ENCODE measurements at regions of chr3 and their contacts with region 1.

Region 1: GRCh38 chr3:122679085-122679881 is 1.4 kb upstream of the PARP14 start:
- DNase-seq: peak; percentile 72
- ATAC-seq: peak; percentile 73
- H3K4me3 ChIP-seq: peak overlapping the region; percentile 77 to 85
- H3K27ac ChIP-seq: peak overlapping the region; percentile 68
- H3K4me1 ChIP-seq: peaks cover 13 to 29% of the 10 kb centered on the region in 2 experiments; a peak in 3 of 4 replicates
- H3K27me3 ChIP-seq: no peaks in the 10 kb centered on the region
- CTCF ChIP-seq: peak; percentile 69 to 91 (median 78)
- POLR2A ChIP-seq: no peak
- RAD21 ChIP-seq: peak; percentile 95

Region 2: DNA sequence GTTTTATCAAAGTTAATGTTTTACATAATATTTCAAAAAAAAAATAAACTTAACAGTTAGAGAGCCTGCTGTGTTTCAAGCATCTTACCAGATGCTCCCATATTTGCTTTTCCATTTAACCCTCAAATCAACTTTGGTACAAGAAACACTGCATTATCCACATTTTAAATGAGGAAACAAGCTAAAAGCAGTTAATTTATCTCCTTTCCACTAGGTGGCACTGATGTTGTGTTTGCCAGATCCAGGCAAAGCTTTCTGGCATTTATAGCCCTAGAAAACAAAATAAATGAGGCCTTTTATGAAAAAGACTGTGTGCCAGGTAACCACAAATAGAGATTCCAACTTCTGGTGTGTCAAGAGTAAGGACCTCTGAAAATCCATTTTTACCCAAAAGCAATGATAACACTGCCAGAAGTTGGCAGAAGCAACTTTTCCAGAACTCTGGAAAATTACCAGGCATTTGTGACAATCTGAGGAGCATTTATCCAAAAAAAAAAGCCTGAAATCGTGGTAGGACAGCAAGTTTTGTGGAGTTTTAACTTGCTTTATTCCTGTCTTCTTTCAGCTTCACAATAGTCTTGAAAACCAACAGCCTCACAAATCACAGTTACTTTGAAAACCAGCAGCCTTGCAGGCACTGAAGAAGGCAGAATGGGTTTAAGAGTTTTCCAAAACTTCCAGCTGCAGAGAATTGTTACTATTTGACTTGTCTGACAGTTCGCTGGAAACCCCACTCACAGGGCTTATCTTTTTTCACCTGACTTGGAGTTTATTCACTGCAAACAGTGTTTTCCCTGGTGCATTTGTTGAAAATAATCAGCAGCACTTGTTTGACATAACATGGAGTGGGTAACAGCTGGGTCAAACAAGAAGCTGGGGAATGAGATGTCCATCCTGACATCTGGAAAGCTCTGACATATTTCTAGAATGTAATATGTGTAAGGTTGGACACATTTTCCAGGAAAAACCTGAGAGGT is 286.1 kb before region 1 on chr3:
- CTCF ChIA-PET with region 1: interaction called, 29 read pairs
- POLR2A ChIA-PET with region 1: no interaction called
- RAD21 ChIA-PET with region 1: interaction called in 1 of 2 experiments, 3 read pairs
- intact Hi-C with region 1: loop called (anchors 1 kb)
- DNase-seq: no peak
- ATAC-seq: no peak
- H3K4me3 ChIP-seq: no peak overlapping the region
- H3K27ac ChIP-seq: no peak overlapping the region
- H3K4me1 ChIP-seq: peaks cover 0 to 4% of the 10 kb centered on the region in 2 experiments; a peak in 1 of 4 replicates
- H3K27me3 ChIP-seq: no peaks in the 10 kb centered on the region
- CTCF ChIP-seq: peak; percentile 60 to 74 (median 61); a peak in 5 of 6 replicates
- POLR2A ChIP-seq: no peak
- RAD21 ChIP-seq: peak; percentile 72

Region 3: DNA sequence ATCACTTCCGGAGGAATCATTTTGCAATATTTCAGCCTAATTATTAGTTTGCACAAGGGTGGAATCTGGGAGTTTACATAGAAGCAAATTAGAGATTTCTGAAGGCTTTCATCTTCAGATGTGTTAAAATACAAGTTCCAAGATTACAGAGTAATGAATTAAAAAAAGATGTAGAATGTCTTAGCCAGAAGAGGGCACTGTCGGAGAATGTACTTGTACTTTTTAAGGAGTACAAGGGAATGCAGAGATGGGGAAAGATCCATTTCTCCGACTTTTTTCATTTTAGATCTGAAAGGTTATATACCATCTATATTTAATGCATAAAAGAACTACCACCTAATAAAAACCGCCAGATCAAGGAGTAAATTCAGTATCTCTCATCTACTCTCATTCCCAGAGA is 220.3 kb before region 1 on chr3:
- CTCF ChIA-PET with region 1: interaction called, 13 read pairs
- POLR2A ChIA-PET with region 1: interaction called, 3 read pairs
- RAD21 ChIA-PET with region 1: interaction called in 1 of 2 experiments, 3 read pairs
- intact Hi-C with region 1: loop called (anchors 2 kb)
- DNase-seq: peak; percentile 23
- ATAC-seq: peak; percentile 61; the same call in 1 of the 2 replicates
- H3K4me3 ChIP-seq: no peak overlapping the region
- H3K27ac ChIP-seq: no peak overlapping the region
- H3K4me1 ChIP-seq: no peaks in the 10 kb centered on the region
- H3K27me3 ChIP-seq: no peaks in the 10 kb centered on the region
- CTCF ChIP-seq: peak; percentile 25 to 55 (median 48); a peak in 4 of 6 replicates
- POLR2A ChIP-seq: no peak
- RAD21 ChIP-seq: peak; percentile 77

Region 4: DNA sequence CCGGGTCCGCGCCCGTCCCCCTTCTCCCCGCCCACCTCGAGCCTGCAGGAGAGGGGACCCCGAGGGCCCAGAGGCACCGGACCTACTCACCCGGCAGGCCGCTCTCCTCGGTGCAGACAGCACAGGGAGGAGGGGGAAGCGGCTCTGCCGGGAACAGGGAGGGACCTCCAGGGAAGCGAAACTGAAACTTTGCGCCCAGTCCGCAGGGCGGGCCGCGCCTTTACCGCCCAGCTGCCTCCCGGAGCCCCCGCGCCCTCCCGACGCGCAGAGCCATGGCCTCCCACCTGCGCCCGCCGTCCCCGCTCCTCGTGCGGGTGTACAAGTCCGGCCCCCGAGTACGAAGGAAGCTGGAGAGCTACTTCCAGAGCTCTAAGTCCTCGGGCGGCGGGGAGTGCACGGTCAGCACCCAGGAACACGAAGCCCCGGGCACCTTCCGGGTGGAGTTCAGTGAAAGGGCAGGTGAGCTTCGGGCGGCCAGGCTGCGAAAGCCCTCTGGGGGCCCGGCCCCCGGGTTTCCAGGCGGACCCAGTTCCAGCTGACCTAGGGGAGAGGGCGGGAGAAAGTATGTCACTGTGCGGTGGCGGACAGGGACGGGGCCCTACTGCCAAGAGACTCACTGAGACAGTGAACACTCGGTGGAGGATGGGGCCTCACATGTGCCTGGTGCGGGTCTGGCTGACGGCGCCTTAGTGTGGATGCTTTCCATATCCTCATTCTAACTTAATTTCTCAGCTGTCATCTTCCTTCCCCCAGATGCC is 114.9 kb before region 1 on chr3 and contains the starts of genes DTX3L and PARP9:
- CTCF ChIA-PET with region 1: interaction called, 20 read pairs
- POLR2A ChIA-PET with region 1: interaction called, 9 read pairs
- RAD21 ChIA-PET with region 1: interaction called, 3 to 4 read pairs
- intact Hi-C with region 1: loop called (anchors 1 kb)
- DNase-seq: no peak
- ATAC-seq: peak; percentile 86
- H3K4me3 ChIP-seq: peak within 1 kb of the TSS; percentile 60 to 81
- H3K27ac ChIP-seq: peak within 1 kb of the TSS; percentile 72
- H3K4me1 ChIP-seq: peaks cover 8 to 17% of the 10 kb centered on the region in 2 experiments
- H3K27me3 ChIP-seq: no peaks in the 10 kb centered on the region
- CTCF ChIP-seq: no peak
- POLR2A ChIP-seq: peak; percentile 32
- RAD21 ChIP-seq: no peak
- total RNA-seq, gene DTX3L: 13.1 TPM
- total RNA-seq, gene PARP9: 9.5 TPM

Region 5: DNA sequence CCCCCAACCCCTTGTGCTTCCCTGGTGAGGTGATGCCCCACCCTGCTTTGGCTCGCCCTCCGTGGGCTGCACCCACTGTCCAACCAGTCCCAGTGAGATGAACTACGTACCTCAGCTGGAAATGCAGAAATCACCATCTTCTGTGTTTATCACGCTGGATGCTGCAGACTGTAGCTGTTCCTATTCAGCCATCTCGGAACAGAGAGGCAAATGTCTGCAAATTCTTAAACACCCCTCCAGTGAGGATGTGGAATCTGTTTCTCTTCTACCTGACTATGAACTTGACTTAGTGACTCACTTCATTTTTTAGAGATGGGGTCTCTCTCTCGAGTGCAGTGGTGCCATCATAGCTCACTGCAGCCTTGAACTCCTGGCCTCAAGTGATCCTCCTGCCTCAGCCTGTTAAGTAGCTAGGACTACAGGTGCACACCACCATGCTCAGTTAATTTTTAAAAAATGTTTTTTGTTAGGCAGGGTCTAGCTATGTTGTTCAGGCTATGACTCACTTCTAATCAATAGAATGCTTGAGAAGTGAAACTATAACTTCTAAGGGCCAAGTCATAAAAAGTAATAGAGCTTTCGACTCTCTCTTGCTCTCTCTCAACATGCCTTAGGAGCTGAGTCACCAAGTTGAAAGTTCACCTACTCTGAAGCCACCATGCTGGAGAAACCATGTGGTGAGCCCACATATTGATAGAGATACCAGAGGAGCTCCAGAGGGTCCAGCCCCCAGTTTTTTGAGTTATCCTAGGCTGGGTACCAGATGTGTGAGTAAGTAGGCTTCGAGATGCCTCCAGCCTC is 10.2 kb before region 1 on chr3:
- CTCF ChIA-PET with region 1: interaction called, 12 read pairs
- POLR2A ChIA-PET with region 1: interaction called, 9 read pairs
- RAD21 ChIA-PET with region 1: interaction called in 1 of 2 experiments, 6 read pairs
- intact Hi-C with region 1: no loop called
- DNase-seq: peak; percentile 89
- ATAC-seq: peak; percentile 92
- H3K4me3 ChIP-seq: peak overlapping the region in 1 of 2 experiments; percentile 11; a peak in 1 of 4 replicates
- H3K27ac ChIP-seq: peak overlapping the region; percentile 69; the same call in 1 of the 2 replicates
- H3K4me1 ChIP-seq: peaks cover 14 to 20% of the 10 kb centered on the region in 2 experiments
- H3K27me3 ChIP-seq: no peaks in the 10 kb centered on the region
- CTCF ChIP-seq: no peak
- POLR2A ChIP-seq: no peak
- RAD21 ChIP-seq: no peak

Region 6: GRCh38 chr3:123194552-123194951 is 515.3 kb after region 1 on chr3:
- CTCF ChIA-PET with region 1: no interaction called
- POLR2A ChIA-PET with region 1: no interaction called
- RAD21 ChIA-PET with region 1: no interaction called
- intact Hi-C with region 1: no loop called
- DNase-seq: peak; percentile 22
- ATAC-seq: peak; percentile 95
- H3K4me3 ChIP-seq: no peak overlapping the region
- H3K27ac ChIP-seq: no peak overlapping the region
- H3K4me1 ChIP-seq: no peaks in the 10 kb centered on the region
- H3K27me3 ChIP-seq: no peaks in the 10 kb centered on the region
- CTCF ChIP-seq: peak; percentile 17 to 66 (median 55); a peak in 5 of 6 replicates
- POLR2A ChIP-seq: no peak
- RAD21 ChIP-seq: peak; percentile 37; the same call in 1 of the 2 replicates

Measured in HCT116 (cell line).